ENCODE measurements at regions of chr17 and their contacts with region 1.

Region 1: DNA sequence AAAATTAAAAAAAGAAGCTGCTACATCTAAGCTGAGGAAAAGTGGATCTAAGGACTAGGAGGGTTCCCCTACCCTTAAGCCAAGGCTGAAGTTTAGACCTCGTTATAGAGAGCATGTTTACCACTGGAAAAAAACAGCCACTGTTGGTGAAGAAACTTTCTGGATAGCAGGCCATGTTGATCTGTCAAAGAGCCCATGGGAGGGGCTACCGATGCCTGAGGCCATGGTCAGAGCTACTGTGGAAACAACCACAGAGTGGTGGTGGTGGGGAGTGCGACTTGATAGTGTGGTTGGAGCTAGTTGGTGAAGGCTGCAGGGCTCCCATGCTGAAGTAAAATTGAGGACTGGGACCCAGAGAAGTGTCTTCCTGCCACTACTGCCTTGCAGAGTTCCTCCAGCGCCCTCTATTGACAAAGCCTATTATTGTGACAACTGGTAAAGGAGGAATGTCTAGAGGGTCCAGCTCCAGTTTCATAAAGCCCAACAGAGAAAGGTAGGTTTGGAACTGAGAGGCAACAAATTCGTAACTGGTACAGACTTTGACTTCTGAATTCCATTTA is 12.7 kb upstream of the FAM20A start:
- DNase-seq: peak; percentile 38 to 74 (median 58)
- H3K4me3 ChIP-seq: no peak overlapping the region
- H3K4me3 Mint-ChIP-seq: no peak overlapping the region
- H3K27ac ChIP-seq: no peak overlapping the region
- H3K27ac Mint-ChIP-seq: peak overlapping the region in 1 of 7 donors; percentile 4
- H3K4me1 ChIP-seq: no peaks in the 10 kb centered on the region
- H3K4me1 Mint-ChIP-seq: peaks cover 9% of the 10 kb centered on the region
- H3K27me3 ChIP-seq: peaks cover 0 to 2% of the 10 kb centered on the region in 2 donors
- H3K27me3 Mint-ChIP-seq: peaks cover 0 to 7% (median 5%) of the 10 kb centered on the region in 3 donors
- CTCF ChIP-seq: peak; percentile 90

Region 2: GRCh38 chr17:68480885-68481284 is 132.9 kb before region 1 on chr17:
- intact Hi-C with region 1: no loop called
- DNase-seq: no peak
- H3K4me3 ChIP-seq: no peak overlapping the region
- H3K4me3 Mint-ChIP-seq: no peak overlapping the region
- H3K27ac ChIP-seq: no peak overlapping the region
- H3K27ac Mint-ChIP-seq: no peak overlapping the region
- H3K4me1 ChIP-seq: peaks cover 22 to 25% of the 10 kb centered on the region in 2 donors
- H3K4me1 Mint-ChIP-seq: peaks cover 21% of the 10 kb centered on the region
- H3K27me3 ChIP-seq: no peaks in the 10 kb centered on the region
- H3K27me3 Mint-ChIP-seq: peaks cover 0 to 3% (median 0%) of the 10 kb centered on the region in 3 donors
- CTCF ChIP-seq: no peak

Region 3: DNA sequence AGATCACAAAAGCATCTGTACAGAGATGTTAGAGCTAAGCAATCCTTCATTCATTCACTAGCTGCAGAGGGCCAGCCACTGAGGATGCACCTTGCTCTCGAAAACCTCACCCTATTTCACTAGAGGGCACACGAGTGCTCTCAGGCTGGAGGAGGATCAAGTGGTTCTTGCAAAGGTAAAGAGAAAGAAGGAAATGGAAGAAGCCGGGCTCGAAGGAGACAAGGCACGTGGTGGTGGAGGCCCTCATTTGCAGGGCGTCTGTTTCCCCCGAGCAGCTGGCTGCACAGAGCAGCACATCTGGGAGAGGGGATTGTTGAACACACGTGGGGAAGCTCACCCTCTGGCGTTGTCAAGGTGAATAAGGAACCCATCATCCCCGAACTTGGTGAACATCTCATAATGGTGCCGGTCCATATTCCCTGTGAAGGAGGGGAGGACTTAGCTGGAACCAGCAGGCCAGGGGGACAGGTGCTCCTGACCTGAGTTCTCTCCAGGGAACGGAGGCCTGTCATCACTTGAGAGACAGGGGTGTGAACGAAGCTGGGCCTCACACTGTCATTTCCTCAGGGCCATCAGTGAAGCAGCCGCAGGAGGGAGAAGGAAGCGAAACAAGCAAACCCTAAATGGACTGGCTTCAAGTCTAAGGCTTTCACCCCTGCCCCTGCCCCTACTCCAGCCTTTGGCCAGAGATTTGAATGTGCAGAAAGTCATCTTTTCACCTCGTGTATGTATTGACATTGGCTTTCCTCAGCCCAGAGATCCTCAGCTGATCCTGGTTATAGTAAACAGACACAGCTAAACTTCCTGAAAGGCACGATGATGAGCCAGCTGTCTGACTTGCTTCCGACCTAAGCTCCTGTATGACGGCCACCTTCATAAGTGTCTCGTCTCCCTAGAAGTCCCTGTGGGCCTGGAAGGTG is 74.0 kb before region 1 on chr17:
- intact Hi-C with region 1: loop called in 1 of 2 experiments (anchors 5 kb)
- DNase-seq: peak in 2 of 3 donors; percentile 4 to 17
- H3K4me3 ChIP-seq: no peak overlapping the region
- H3K4me3 Mint-ChIP-seq: peak overlapping the region in 1 of 2 donors; percentile 36
- H3K27ac ChIP-seq: peak overlapping the region; percentile 0 to 54
- H3K27ac Mint-ChIP-seq: peak overlapping the region in 6 of 7 donors; percentile 23 to 87 (median 62)
- H3K4me1 ChIP-seq: peaks cover 9 to 11% of the 10 kb centered on the region in 2 donors
- H3K4me1 Mint-ChIP-seq: peaks cover 15% of the 10 kb centered on the region
- H3K27me3 ChIP-seq: no peaks in the 10 kb centered on the region
- H3K27me3 Mint-ChIP-seq: peaks cover 2% of the 10 kb centered on the region in 3 donors
- CTCF ChIP-seq: peak; percentile 55

Region 4: GRCh38 chr17:68566442-68566738 is 47.4 kb before region 1 on chr17:
- intact Hi-C with region 1: loop called (anchors 5 to 10 kb)
- DNase-seq: peak in 2 of 3 donors; percentile 27 to 55
- H3K4me3 ChIP-seq: no peak overlapping the region
- H3K4me3 Mint-ChIP-seq: no peak overlapping the region
- H3K27ac ChIP-seq: no peak overlapping the region
- H3K27ac Mint-ChIP-seq: peak overlapping the region in 2 of 7 donors; percentile 2 to 36
- H3K4me1 ChIP-seq: peaks cover 4 to 7% of the 10 kb centered on the region in 2 donors
- H3K4me1 Mint-ChIP-seq: peaks cover 20% of the 10 kb centered on the region
- H3K27me3 ChIP-seq: no peaks in the 10 kb centered on the region
- H3K27me3 Mint-ChIP-seq: peaks cover 5 to 8% (median 7%) of the 10 kb centered on the region in 3 donors
- CTCF ChIP-seq: no peak

Region 5: GRCh38 chr17:68572138-68572842 is 41.5 kb before region 1 on chr17:
- intact Hi-C with region 1: loop called (anchors 5 to 10 kb)
- DNase-seq: peak; percentile 12 to 33 (median 29)
- H3K4me3 ChIP-seq: no peak overlapping the region
- H3K4me3 Mint-ChIP-seq: no peak overlapping the region
- H3K27ac ChIP-seq: no peak overlapping the region
- H3K27ac Mint-ChIP-seq: peak overlapping the region in 2 of 7 donors; percentile 15 to 35
- H3K4me1 ChIP-seq: peaks cover 5 to 6% of the 10 kb centered on the region in 2 donors
- H3K4me1 Mint-ChIP-seq: peaks cover 11% of the 10 kb centered on the region
- H3K27me3 ChIP-seq: no peaks in the 10 kb centered on the region
- H3K27me3 Mint-ChIP-seq: peaks cover 2 to 8% (median 3%) of the 10 kb centered on the region in 3 donors
- CTCF ChIP-seq: no peak